ENCODE measurements at regions of chr12 and their contacts with region 1.

Region 1: DNA sequence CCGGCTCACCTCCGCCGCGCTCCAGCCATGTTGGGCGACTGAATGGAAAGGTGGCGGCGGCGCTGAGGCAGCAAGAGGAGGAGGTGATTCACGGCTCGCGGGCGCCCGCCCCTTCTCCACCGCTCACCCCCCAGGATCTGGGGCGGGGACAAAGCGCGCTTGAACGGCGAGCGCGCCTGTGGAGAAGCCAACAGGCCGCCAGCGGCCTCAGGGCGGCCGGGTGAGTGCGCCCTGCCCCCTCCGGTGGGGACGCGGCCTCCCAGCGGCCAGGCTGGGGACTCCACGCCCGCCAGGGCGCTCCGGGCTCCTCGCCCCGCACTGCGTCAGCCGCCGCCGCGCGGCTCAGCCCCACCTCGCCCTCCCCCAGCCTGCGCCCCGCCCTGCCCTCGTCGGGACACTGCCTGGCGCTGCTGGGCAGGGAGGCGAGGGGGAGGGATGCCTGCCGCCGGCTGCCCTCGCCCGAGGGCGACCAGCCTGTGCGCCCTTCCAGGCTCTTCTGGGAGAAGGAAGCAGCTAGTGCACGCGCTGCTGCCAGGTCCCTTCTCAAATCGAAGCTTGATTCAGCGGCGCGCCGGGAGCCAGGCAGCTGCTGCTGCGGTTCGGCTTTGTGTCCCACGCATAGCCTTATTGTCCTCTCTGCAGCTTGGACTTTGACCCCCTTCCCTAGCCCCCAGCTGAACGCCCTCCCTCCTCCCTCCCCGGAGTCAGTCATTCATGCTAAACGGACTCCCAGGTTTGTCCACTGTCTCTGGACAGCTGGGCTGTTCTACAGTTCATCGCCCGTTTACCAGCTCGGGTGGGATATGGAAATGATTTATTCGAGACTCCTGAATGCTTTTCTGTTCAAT is at the start of gene KIF21A:
- DNase-seq: peak; percentile 83 to 97
- H3K4me3 ChIP-seq: peak within 1 kb of the TSS; percentile 99
- H3K27ac ChIP-seq: peak within 1 kb of the TSS; percentile 56
- H3K4me1 ChIP-seq: peaks cover 23% of the 10 kb centered on the region
- H3K27me3 ChIP-seq: no peaks in the 10 kb centered on the region
- CTCF ChIP-seq: peak; percentile 41; the same call in 1 of the 2 replicates
- total RNA-seq, gene KIF21A: 12.1 and 13.6 TPM in 2 replicates

Region 2: DNA sequence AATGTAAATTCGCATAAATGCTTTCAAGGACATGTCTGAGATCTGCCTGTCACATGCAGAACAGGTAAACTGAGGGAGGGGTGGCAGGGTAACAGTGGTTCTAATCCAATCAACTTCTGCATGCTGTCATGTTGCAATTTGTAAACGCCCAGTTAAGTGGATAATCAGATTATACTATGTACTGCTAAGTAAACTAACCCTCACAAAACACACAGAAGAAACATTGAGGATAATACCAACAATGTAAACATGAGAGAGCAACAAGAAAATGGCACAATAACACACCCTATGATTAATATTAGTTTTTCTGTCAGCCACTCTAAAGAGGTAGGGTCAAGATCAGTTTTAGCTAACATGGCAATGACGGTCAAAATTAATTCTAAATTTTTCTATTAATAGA is 124.1 kb before region 1 on chr12:
- CTCF ChIA-PET with region 1: no interaction called
- POLR2A ChIA-PET with region 1: no interaction called
- intact Hi-C with region 1: loop called (anchors 5 kb)
- DNase-seq: no peak
- H3K4me3 ChIP-seq: no peak overlapping the region
- H3K27ac ChIP-seq: no peak overlapping the region
- H3K4me1 ChIP-seq: no peaks in the 10 kb centered on the region
- H3K27me3 ChIP-seq: no peaks in the 10 kb centered on the region
- CTCF ChIP-seq: no peak

Region 3: DNA sequence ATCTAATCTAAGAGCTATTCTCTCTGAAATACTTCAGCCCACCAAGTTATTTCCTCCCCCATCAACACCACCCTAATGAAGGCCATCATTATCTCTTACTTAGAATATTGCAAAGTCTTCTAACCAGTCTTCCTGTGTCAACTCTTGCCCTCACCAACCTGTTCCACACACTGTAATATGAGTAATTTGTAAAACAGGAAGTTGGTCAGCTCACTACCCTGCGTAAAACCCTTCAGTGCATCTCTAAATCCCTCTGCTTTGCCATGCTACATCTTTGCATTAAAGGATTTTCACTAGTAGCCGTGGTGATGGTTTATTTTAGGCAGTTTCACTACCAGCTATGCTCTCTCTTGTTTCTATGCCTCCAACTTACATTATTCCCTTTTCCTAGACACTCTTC is 70.4 kb before region 1 on chr12:
- CTCF ChIA-PET with region 1: no interaction called
- POLR2A ChIA-PET with region 1: no interaction called
- intact Hi-C with region 1: loop called (anchors 5 kb)
- DNase-seq: no peak
- H3K4me3 ChIP-seq: no peak overlapping the region
- H3K27ac ChIP-seq: no peak overlapping the region
- H3K4me1 ChIP-seq: peaks cover 11% of the 10 kb centered on the region
- H3K27me3 ChIP-seq: no peaks in the 10 kb centered on the region
- CTCF ChIP-seq: no peak

Region 4: GRCh38 chr12:39587225-39587624 is 143.9 kb after region 1 on chr12:
- CTCF ChIA-PET with region 1: no interaction called
- POLR2A ChIA-PET with region 1: no interaction called
- intact Hi-C with region 1: loop called (anchors 10 kb)
- DNase-seq: no peak
- H3K4me3 ChIP-seq: no peak overlapping the region
- H3K27ac ChIP-seq: no peak overlapping the region
- H3K4me1 ChIP-seq: peaks cover 1% of the 10 kb centered on the region
- H3K27me3 ChIP-seq: no peaks in the 10 kb centered on the region
- CTCF ChIP-seq: peak; percentile 34